ACHN (cell line): ENCODE measurements at regions of chr7 and their contacts with region 1.

Region 1: GRCh38 chr7:73342645-73343044 is 14.7 kb downstream of the FKBP6 start:
- DNase-seq: peak; percentile 42

Region 2: GRCh38 chr7:73446682-73447081 is 104.0 kb after region 1 on chr7:
- in situ Hi-C with region 1: loop called (anchors 5 kb)
- DNase-seq: no peak